Heart left ventricle (tissue), 16 donors: ENCODE measurements at regions of chr5 and their contacts with region 1.

Region 1: DNA sequence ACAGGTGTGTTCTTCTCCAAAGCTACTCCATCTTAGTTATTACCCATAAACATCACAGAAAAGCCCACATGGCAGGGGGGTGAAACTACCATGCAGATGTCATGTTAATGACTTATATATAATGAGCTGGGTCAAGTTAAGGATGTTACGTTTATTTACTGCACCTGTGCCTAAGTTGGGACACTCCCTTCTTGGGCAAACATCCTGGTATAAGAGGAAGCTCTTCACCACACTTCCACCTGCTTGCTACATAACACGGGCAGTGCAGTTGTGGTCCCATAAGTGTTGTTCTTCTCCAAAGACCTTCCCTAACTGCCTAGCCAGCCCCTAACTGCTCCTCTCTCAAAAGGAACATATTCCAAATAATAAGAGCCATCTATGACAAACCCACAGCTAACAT is 9.3 kb upstream of the ZCCHC9 start:
- DNase-seq: no peak
- ATAC-seq: no peak
- H3K4me3 ChIP-seq: no peak overlapping the region
- H3K27ac ChIP-seq: no peak overlapping the region
- H3K4me1 ChIP-seq: peaks cover 0 to 1% (median 0%) of the 10 kb centered on the region in 12 donors
- H3K27me3 ChIP-seq: no peaks in the 10 kb centered on the region
- CTCF ChIP-seq: no peak
- POLR2A ChIP-seq: no peak

Region 2: DNA sequence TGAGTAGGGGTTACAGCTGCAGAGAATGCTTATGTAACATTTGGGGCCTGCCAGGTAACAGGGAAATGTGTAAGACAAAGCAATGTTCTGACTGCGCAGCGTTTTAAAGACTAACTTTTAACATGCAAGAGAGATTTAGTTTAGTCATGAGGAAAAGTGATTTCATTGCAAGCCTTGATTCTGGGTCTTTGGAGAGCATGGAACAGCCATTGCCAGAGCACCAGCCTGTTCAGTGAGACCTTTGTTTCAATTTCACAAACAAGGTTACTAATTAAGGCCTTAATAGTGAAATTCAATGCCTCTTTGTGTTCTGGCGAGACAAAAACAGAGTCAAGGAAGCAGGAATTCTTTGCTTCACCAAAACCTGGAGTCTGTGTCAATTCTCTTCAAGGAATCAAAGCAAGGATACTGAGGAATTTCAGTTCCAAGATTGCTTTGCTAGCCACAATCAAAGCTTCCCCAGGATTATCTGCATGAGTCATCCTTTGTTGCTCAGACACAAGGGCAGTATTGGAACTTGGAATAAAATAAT is 44.6 kb before region 1 on chr5:
- intact Hi-C with region 1: loop called in 2 of 10 experiments (anchors 10 kb)
- DNase-seq: no peak
- ATAC-seq: no peak
- H3K4me3 ChIP-seq: no peak overlapping the region
- H3K27ac ChIP-seq: peak overlapping the region in 8 of 12 donors; percentile 2 to 95 (median 25)
- H3K4me1 ChIP-seq: peaks cover 5 to 98% (median 62%) of the 10 kb centered on the region in 12 donors
- H3K27me3 ChIP-seq: no peaks in the 10 kb centered on the region
- CTCF ChIP-seq: no peak
- POLR2A ChIP-seq: no peak